ENCODE measurements at regions of chr5 and their contacts with region 1.

Region 1: DNA sequence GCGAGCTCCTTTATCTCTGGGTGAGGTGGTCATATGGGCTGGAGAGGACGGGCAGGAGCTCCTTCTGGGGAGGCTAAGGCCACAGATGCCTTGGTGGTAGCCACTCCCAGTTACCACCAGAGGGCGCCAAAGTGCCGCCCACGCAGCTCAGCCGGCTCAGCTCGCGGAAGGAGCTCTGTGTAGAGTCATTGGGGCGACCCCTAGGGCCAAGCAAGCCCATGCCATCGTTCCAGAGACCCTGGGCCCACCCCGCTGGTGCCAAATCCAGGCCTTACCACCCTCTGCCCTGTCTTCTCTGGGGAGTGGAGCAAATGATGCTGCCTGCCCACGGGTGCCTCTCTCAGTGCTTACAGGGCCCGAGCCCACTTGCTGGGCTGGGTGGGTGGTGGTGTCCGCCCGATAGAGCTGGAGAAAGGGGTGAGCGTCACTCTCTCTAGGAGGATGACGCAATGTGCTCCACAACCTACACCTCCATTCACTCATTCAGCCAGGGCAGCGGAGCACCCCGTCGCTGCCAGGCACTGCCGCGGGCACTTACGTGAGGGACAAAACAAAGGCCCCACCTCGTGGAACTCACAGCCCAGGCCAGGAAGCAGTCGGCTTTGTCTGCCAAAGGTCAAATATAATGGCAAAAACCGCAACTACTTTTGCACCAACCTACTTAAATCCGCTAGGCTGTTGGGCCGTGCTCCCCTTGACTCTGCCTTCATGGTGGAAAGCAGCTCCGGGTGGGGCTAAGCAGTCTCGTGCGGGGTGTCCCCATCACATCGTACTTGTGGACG is 13.8 kb downstream of the TSPAN17 start:
- DNase-seq: peak; percentile 77 to 83
- H3K4me3 ChIP-seq: no peak overlapping the region
- H3K4me3 Mint-ChIP-seq: no peak overlapping the region
- H3K27ac Mint-ChIP-seq: no peak overlapping the region
- H3K4me1 ChIP-seq: no peaks in the 10 kb centered on the region
- H3K4me1 Mint-ChIP-seq: no peaks in the 10 kb centered on the region
- H3K27me3 ChIP-seq: no peaks in the 10 kb centered on the region
- H3K27me3 Mint-ChIP-seq: peaks cover 6% of the 10 kb centered on the region
- CTCF ChIP-seq: peak; percentile 97 to 98

Region 2: GRCh38 chr5:175729829-175730277 is 931.2 kb before region 1 on chr5:
- CTCF ChIA-PET with region 1: interaction called, 13 read pairs
- POLR2A ChIA-PET with region 1: no interaction called
- intact Hi-C with region 1: no loop called
- DNase-seq: peak; percentile 92 to 97
- H3K4me3 ChIP-seq: no peak overlapping the region
- H3K4me3 Mint-ChIP-seq: peak overlapping the region; percentile 52
- H3K27ac Mint-ChIP-seq: no peak overlapping the region
- H3K4me1 ChIP-seq: no peaks in the 10 kb centered on the region
- H3K4me1 Mint-ChIP-seq: peaks cover 15% of the 10 kb centered on the region
- H3K27me3 ChIP-seq: no peaks in the 10 kb centered on the region
- H3K27me3 Mint-ChIP-seq: peaks cover 3% of the 10 kb centered on the region
- CTCF ChIP-seq: peak; percentile 97 to 99

Region 3: GRCh38 chr5:176629853-176630712 is 31.0 kb before region 1 on chr5 and contains the starts of genes EIF4E1B and SNCB:
- CTCF ChIA-PET with region 1: interaction called, 10 read pairs
- POLR2A ChIA-PET with region 1: no interaction called
- intact Hi-C with region 1: no loop called
- DNase-seq: peak in 1 of 2 experiments; percentile 75
- H3K4me3 ChIP-seq: peak within 1 kb of the TSS; percentile 39
- H3K4me3 Mint-ChIP-seq: peak within 1 kb of the TSS; percentile 67
- H3K27ac Mint-ChIP-seq: no peak within 1 kb of the TSS
- H3K4me1 ChIP-seq: peaks cover 7% of the 10 kb centered on the region
- H3K4me1 Mint-ChIP-seq: no peaks in the 10 kb centered on the region
- H3K27me3 ChIP-seq: peaks cover 5% of the 10 kb centered on the region
- H3K27me3 Mint-ChIP-seq: peaks cover 40% of the 10 kb centered on the region
- CTCF ChIP-seq: no peak
- total RNA-seq, gene EIF4E1B: not detected in 2 replicates
- total RNA-seq, gene SNCB: not detected in 2 replicates

Region 4: GRCh38 chr5:176744584-176744965 is 83.5 kb after region 1 on chr5:
- CTCF ChIA-PET with region 1: interaction called, 14 read pairs
- POLR2A ChIA-PET with region 1: no interaction called
- intact Hi-C with region 1: no loop called
- DNase-seq: no peak
- H3K4me3 ChIP-seq: no peak overlapping the region
- H3K4me3 Mint-ChIP-seq: no peak overlapping the region
- H3K27ac Mint-ChIP-seq: no peak overlapping the region
- H3K4me1 ChIP-seq: no peaks in the 10 kb centered on the region
- H3K4me1 Mint-ChIP-seq: no peaks in the 10 kb centered on the region
- H3K27me3 ChIP-seq: no peaks in the 10 kb centered on the region
- H3K27me3 Mint-ChIP-seq: peaks cover 9% of the 10 kb centered on the region
- CTCF ChIP-seq: peak; percentile 24

Region 5: DNA sequence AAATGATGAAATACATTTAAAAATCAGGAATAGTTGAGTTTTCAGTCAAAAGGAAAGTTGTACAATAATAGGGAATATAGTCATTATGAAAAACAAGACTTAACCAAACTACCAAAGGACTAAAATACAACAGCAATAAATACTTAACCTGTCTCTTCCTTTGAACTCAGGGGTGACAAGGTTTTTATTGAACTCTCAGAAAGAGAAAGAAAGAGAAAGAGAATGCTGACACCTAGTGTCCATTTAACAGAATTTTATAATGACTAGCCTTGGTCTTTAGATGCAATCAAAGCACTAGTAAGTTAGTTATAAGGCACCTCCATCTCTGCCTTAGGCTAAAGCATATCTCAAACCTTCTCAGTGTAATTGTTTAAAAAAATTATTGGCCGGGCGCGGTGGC is 298.0 kb after region 1 on chr5:
- CTCF ChIA-PET with region 1: interaction called, 5 read pairs
- POLR2A ChIA-PET with region 1: no interaction called
- intact Hi-C with region 1: loop called (anchors 2 kb)
- DNase-seq: peak in 1 of 2 experiments; percentile 22
- H3K4me3 ChIP-seq: no peak overlapping the region
- H3K4me3 Mint-ChIP-seq: no peak overlapping the region
- H3K27ac Mint-ChIP-seq: no peak overlapping the region
- H3K4me1 ChIP-seq: no peaks in the 10 kb centered on the region
- H3K4me1 Mint-ChIP-seq: no peaks in the 10 kb centered on the region
- H3K27me3 ChIP-seq: no peaks in the 10 kb centered on the region
- H3K27me3 Mint-ChIP-seq: no peaks in the 10 kb centered on the region
- CTCF ChIP-seq: peak; percentile 34 to 47

Region 6: GRCh38 chr5:177425801-177426565 is 764.9 kb after region 1 on chr5:
- CTCF ChIA-PET with region 1: no interaction called
- POLR2A ChIA-PET with region 1: no interaction called
- intact Hi-C with region 1: no loop called
- DNase-seq: peak; percentile 100
- H3K4me3 ChIP-seq: peak overlapping the region; percentile 59
- H3K4me3 Mint-ChIP-seq: peak overlapping the region; percentile 92
- H3K27ac Mint-ChIP-seq: peak overlapping the region; percentile 99
- H3K4me1 ChIP-seq: peaks cover 15% of the 10 kb centered on the region
- H3K4me1 Mint-ChIP-seq: peaks cover 12% of the 10 kb centered on the region
- H3K27me3 ChIP-seq: no peaks in the 10 kb centered on the region
- H3K27me3 Mint-ChIP-seq: no peaks in the 10 kb centered on the region
- CTCF ChIP-seq: no peak

Measured in Caco-2 (cell line).